Endothelial cell of umbilical vein (primary cell): ENCODE measurements at regions of chr5 and their contacts with region 1.

Region 1: GRCh38 chr5:7078901-7079300 is 317.0 kb upstream of the ADCY2 start:
- DNase-seq: peak; percentile 46
- H3K4me3 ChIP-seq: peak overlapping the region in 1 of 3 experiments; percentile 1
- H3K27ac ChIP-seq: peak overlapping the region; percentile 38
- H3K4me1 ChIP-seq: peaks cover 12% of the 10 kb centered on the region
- H3K27me3 ChIP-seq: no peaks in the 10 kb centered on the region
- CTCF ChIP-seq: peak in 1 of 2 donors; percentile 14
- POLR2A ChIP-seq: no peak

Region 2: DNA sequence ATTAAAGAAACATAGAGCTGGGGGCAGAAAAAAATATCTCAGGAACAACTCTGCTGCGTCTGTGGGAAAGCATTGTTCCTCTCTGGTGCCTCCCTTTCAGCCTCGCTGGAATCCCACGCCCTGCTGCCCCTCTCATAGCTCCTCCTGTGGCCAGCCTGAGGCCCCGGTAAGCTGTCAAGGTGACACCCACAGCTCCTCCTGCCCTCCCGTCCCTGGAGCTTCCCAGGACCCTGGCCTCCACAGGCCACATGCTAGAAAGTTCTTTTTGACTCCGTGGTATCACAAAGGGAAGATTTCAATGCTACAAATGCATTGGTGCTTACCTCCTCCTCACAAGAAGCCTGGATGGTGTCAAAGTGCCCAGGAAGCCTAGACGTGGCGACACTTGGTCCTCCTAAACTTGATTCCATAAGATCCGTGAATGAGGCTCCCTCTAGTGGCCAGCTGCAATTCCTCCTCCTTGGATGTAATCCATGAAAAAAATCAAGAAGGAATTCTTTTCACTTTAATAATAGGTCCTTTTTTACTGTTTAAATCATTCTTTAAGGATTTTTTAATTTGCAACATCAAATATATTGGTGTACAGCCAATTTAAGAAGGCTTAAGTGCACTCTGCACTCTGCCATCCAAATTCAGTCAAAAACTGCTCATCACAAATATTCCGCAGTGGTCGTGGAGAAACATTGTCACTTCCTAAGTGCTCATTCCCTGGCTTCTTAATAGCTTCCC is 667.1 kb after region 1 on chr5:
- CTCF ChIA-PET with region 1: interaction called, 9 read pairs
- POLR2A ChIA-PET with region 1: no interaction called
- dilution Hi-C with region 1: no loop called
- intact Hi-C with region 1: loop called (anchors 1 kb)
- DNase-seq: peak; percentile 52
- H3K4me3 ChIP-seq: no peak overlapping the region
- H3K27ac ChIP-seq: no peak overlapping the region
- H3K4me1 ChIP-seq: no peaks in the 10 kb centered on the region
- H3K27me3 ChIP-seq: no peaks in the 10 kb centered on the region
- CTCF ChIP-seq: peak; percentile 71 to 78
- POLR2A ChIP-seq: no peak

Region 3: GRCh38 chr5:7754992-7755596 is 676.2 kb after region 1 on chr5:
- CTCF ChIA-PET with region 1: no interaction called
- POLR2A ChIA-PET with region 1: no interaction called
- dilution Hi-C with region 1: no loop called
- intact Hi-C with region 1: loop called (anchors 1 kb)
- DNase-seq: peak; percentile 25
- H3K4me3 ChIP-seq: no peak overlapping the region
- H3K27ac ChIP-seq: no peak overlapping the region
- H3K4me1 ChIP-seq: no peaks in the 10 kb centered on the region
- H3K27me3 ChIP-seq: no peaks in the 10 kb centered on the region
- CTCF ChIP-seq: peak; percentile 70 to 80
- POLR2A ChIP-seq: no peak